Head of caudate nucleus (tissue), 42 donors: ENCODE measurements at regions of chr7 and their contacts with region 1.

Region 1: DNA sequence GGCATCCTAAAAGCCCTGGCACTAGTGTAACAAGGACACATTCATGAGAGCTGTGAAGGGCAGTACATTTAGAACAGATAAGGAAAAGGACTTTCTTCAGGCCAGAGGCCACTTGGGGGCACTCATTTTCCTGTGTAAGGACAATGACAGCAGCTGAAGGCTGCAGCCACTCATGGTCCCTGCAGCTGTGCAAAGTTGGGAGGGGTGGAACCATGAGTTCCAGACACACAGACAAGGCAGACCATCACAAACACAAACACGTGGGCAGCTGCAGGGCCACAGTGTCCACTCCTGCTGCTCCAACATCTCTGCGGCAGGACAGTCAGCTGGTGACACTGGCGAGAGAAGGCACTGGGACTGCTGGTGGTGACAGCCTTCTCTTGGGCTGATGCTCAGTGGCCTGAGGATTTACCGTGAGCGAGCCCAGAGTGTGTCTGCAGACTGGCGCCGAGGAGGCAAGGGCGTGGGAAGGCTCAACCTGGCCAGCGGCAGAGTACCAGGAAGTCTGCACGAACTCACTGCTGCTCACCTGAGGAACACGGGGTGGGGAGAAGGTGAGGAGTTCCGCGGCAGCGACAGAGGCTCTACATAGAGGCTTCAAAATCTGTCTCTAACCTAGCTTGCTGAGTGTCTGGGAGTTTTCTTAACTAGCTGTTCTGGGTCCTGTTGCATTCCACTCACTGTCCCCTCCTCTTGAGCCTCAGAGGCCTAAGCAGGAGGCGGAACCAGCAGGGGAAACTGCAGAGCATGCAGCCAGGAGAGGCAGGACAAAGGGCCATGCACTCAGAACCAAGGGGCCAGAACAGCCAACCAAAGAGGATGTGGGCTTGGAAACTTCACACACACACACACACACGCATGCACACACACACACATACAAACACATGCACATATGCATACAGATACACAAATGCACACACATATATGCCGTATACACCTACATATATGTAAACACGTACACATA is 76.5 kb upstream of the DDC start:
- DNase-seq: peak; percentile 69 to 97 (median 90)

Region 2: GRCh38 chr7:50679218-50680007 is 37.7 kb after region 1 on chr7:
- intact Hi-C with region 1: loop called (anchors 5 kb)
- DNase-seq: peak in 1 of 42 donors; percentile 42